MCF 10A (cell line): ENCODE measurements at regions of chr14 and their contacts with region 1.

Region 1: DNA sequence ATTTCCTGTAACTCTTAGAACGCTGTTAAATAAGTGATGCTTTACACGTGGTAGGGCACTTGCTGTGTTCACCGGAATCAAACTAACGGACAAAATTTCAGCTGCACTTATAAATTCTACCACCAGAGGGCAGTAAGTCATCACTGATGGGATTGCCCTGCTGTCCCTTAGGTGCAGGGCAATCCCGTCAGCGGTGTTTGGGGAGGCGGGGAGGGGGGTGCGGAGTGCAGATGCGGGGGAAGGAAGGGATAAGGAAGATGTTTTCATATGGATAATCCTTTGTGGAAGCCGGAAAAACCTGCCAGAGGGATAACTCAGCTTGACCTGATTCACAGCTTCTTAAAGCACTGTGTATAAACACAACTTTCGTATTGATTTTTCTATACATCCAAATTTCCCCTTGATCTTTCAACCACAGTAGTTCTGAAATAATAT is 21.7 kb upstream of the SLC10A1 start:
- DNase-seq: peak; percentile 74
- H3K4me3 Mint-ChIP-seq: no peak overlapping the region
- H3K27ac Mint-ChIP-seq: no peak overlapping the region
- H3K4me1 Mint-ChIP-seq: no peaks in the 10 kb centered on the region
- H3K27me3 Mint-ChIP-seq: no peaks in the 10 kb centered on the region
- CTCF ChIP-seq: peak; percentile 82

Region 2: GRCh38 chr14:69580009-69580577 is 238.7 kb before region 1 on chr14:
- CTCF ChIA-PET with region 1: no interaction called
- POLR2A ChIA-PET with region 1: no interaction called
- intact Hi-C with region 1: loop called (anchors 10 kb)
- DNase-seq: peak; percentile 90
- H3K4me3 Mint-ChIP-seq: no peak overlapping the region
- H3K27ac Mint-ChIP-seq: peak overlapping the region; percentile 32
- H3K4me1 Mint-ChIP-seq: peaks cover 18% of the 10 kb centered on the region
- H3K27me3 Mint-ChIP-seq: peaks cover 17% of the 10 kb centered on the region
- CTCF ChIP-seq: peak; percentile 49

Region 3: GRCh38 chr14:70013269-70013873 is 194.6 kb after region 1 on chr14:
- CTCF ChIA-PET with region 1: interaction called, 12 read pairs
- POLR2A ChIA-PET with region 1: no interaction called
- intact Hi-C with region 1: loop called (anchors 5 kb)
- DNase-seq: peak; percentile 75
- H3K4me3 Mint-ChIP-seq: no peak overlapping the region
- H3K27ac Mint-ChIP-seq: peak overlapping the region; percentile 28
- H3K4me1 Mint-ChIP-seq: peaks cover 17% of the 10 kb centered on the region
- H3K27me3 Mint-ChIP-seq: no peaks in the 10 kb centered on the region
- CTCF ChIP-seq: peak; percentile 83

Region 4: GRCh38 chr14:70073924-70074566 is 255.3 kb after region 1 on chr14:
- CTCF ChIA-PET with region 1: interaction called, 21 read pairs
- POLR2A ChIA-PET with region 1: interaction called, 5 read pairs
- intact Hi-C with region 1: loop called (anchors 1 kb)
- DNase-seq: peak; percentile 86
- H3K4me3 Mint-ChIP-seq: no peak overlapping the region
- H3K27ac Mint-ChIP-seq: no peak overlapping the region
- H3K4me1 Mint-ChIP-seq: no peaks in the 10 kb centered on the region
- H3K27me3 Mint-ChIP-seq: peaks cover 35% of the 10 kb centered on the region
- CTCF ChIP-seq: peak; percentile 92

Region 5: GRCh38 chr14:70567791-70568190 is 749.0 kb after region 1 on chr14:
- CTCF ChIA-PET with region 1: no interaction called
- POLR2A ChIA-PET with region 1: no interaction called
- intact Hi-C with region 1: loop called (anchors 5 kb)
- DNase-seq: peak; percentile 49
- H3K4me3 Mint-ChIP-seq: no peak overlapping the region
- H3K27ac Mint-ChIP-seq: no peak overlapping the region
- H3K4me1 Mint-ChIP-seq: peaks cover 4% of the 10 kb centered on the region
- H3K27me3 Mint-ChIP-seq: no peaks in the 10 kb centered on the region
- CTCF ChIP-seq: peak; percentile 57